OCI-LY7 (cell line): ENCODE measurements at regions of chr4 and their contacts with region 1.

Region 1: GRCh38 chr4:86961605-86962295 is 26.9 kb downstream of the AFF1 start:
- DNase-seq: peak; percentile 95
- H3K4me3 ChIP-seq: peak overlapping the region; percentile 61
- H3K27ac ChIP-seq: peak overlapping the region; percentile 100
- H3K4me1 ChIP-seq: peaks cover 96% of the 10 kb centered on the region
- CTCF ChIP-seq: no peak

Region 2: DNA sequence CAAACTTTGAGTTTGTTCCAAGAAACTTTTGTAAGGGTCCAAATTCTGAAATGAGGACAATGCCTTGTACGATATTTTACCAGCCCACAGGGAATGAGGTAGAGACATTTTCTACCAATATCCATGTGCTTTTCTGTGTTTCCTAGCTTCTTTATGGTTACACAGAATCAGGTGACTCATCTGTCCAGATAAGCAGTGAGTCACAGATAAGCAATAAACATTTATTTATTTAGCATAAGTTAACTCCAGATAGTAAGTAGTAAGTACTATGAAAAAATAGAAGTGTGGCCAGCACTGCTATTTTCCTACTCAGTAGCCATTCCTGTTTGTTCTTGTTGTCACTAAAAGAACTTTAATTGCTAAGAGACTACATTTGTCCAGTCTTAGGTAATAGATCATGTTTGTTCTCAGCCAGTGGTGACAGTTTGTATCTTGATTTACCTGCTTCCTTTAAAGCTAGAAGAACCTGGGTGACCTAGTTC is 19.5 kb before region 1 on chr4:
- CTCF ChIA-PET with region 1: interaction called, 7 read pairs
- POLR2A ChIA-PET with region 1: interaction called, 125 read pairs
- intact Hi-C with region 1: loop called (anchors 1 kb)
- DNase-seq: no peak
- H3K4me3 ChIP-seq: no peak overlapping the region
- H3K27ac ChIP-seq: no peak overlapping the region
- H3K4me1 ChIP-seq: peaks cover 92% of the 10 kb centered on the region
- CTCF ChIP-seq: no peak

Region 3: DNA sequence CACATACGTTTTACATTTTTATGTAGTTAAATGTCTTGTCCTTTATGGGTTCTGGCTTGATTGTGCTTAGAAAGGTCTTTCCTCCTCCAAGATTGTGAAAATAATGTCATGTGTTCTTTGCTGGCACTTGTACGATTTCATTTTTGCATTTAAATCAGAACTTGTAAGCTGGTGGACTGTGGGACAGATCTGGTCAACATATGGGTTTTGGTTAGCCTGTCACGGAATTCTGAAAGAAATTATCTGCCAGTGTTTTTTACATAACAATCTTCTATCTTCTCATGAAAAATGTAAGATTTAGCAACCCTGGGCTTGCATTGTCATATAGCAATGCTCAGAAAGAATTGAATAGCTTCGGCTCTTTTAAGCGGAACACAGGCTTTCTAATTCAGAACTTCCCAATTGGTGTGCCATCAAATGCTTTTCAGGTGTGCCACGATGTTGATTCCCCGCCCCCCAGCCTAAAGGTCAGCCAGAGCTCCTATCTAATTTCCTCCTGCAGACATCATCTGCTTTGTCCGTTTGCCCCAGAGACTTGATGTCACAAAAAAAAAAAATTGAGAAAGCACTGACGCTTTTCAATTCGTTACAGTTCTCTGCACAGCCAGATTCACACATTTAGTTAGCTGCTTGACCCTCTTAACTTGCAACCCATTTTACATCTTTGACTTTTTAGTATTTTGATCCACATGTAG is 10.8 kb before region 1 on chr4:
- CTCF ChIA-PET with region 1: no interaction called
- POLR2A ChIA-PET with region 1: interaction called, 50 read pairs
- intact Hi-C with region 1: no loop called
- DNase-seq: peak; percentile 67
- H3K4me3 ChIP-seq: peak overlapping the region; percentile 27
- H3K27ac ChIP-seq: peak overlapping the region; percentile 34
- H3K4me1 ChIP-seq: peaks cover 61% of the 10 kb centered on the region
- CTCF ChIP-seq: no peak

Region 4: GRCh38 chr4:86977621-86978184 is 16.0 kb after region 1 on chr4:
- CTCF ChIA-PET with region 1: no interaction called
- POLR2A ChIA-PET with region 1: interaction called, 49 read pairs
- intact Hi-C with region 1: no loop called
- DNase-seq: no peak
- H3K4me3 ChIP-seq: peak overlapping the region; percentile 28
- H3K27ac ChIP-seq: peak overlapping the region; percentile 1
- H3K4me1 ChIP-seq: peaks cover 85% of the 10 kb centered on the region
- CTCF ChIP-seq: no peak

Region 5: GRCh38 chr4:86999136-86999643 is 37.4 kb after region 1 on chr4:
- CTCF ChIA-PET with region 1: interaction called, 3 read pairs
- POLR2A ChIA-PET with region 1: interaction called, 50 read pairs
- intact Hi-C with region 1: loop called (anchors 1 kb)
- DNase-seq: no peak
- H3K4me3 ChIP-seq: peak overlapping the region; percentile 55
- H3K27ac ChIP-seq: peak overlapping the region; percentile 96
- H3K4me1 ChIP-seq: peaks cover 77% of the 10 kb centered on the region
- CTCF ChIP-seq: no peak